ENCODE measurements at regions of chr10 and their contacts with region 1.

Region 1: DNA sequence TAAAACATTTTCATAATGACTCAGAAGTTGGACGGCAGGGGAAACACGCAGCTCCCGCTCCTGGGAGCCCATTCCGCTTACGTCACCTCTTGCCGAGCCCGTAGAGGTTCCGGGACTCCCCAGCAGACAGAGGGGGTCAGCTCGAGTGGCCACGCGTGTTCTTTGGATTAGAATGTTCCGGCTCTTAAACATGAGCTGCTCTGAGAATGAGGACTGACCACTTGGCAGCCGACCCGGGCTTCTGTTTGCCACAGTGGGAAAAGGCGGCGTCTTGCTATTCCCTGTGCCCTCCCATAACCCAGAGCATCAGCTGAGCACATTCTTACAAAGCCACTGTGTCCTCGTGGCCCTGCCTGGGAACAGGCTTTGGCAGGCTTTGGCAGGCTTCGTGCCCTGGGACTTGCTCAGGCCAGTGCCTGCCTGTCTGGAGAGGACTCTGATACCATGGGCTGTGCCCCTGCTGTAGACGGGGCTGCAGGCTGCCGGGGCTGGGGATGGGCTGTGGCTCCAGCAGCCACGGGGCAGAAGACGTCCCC is 40.1 kb downstream of the PFKP start:
- DNase-seq: peak; percentile 97
- H3K4me3 ChIP-seq: peak overlapping the region; percentile 1 to 30 (median 18)
- H3K27ac ChIP-seq: peak overlapping the region; percentile 98
- H3K4me1 ChIP-seq: peaks cover 19% of the 10 kb centered on the region
- H3K27me3 ChIP-seq: no peaks in the 10 kb centered on the region
- CTCF ChIP-seq: no peak

Region 2: GRCh38 chr10:3068201-3068967 is 39.1 kb before region 1 on chr10:
- CTCF ChIA-PET with region 1: no interaction called
- dilution Hi-C with region 1: no loop called
- in situ Hi-C with region 1: no loop called
- intact Hi-C with region 1: loop called (anchors 1 kb)
- DNase-seq: peak; percentile 42
- H3K4me3 ChIP-seq: peak overlapping the region; percentile 85 to 94 (median 94)
- H3K27ac ChIP-seq: peak overlapping the region; percentile 48
- H3K4me1 ChIP-seq: peaks cover 44% of the 10 kb centered on the region
- H3K27me3 ChIP-seq: no peaks in the 10 kb centered on the region
- CTCF ChIP-seq: no peak